ENCODE measurements at regions of chr17 and their contacts with region 1.

Region 1: GRCh38 chr17:44935116-44935515 is 12.5 kb downstream of the KIF18B start:
- DNase-seq: no peak
- ATAC-seq: no peak
- H3K4me3 ChIP-seq: no peak overlapping the region
- H3K27ac ChIP-seq: no peak overlapping the region
- H3K4me1 ChIP-seq: peaks cover 0 to 26% (median 6%) of the 10 kb centered on the region in 9 donors
- H3K27me3 ChIP-seq: no peaks in the 10 kb centered on the region
- CTCF ChIP-seq: no peak

Region 2: DNA sequence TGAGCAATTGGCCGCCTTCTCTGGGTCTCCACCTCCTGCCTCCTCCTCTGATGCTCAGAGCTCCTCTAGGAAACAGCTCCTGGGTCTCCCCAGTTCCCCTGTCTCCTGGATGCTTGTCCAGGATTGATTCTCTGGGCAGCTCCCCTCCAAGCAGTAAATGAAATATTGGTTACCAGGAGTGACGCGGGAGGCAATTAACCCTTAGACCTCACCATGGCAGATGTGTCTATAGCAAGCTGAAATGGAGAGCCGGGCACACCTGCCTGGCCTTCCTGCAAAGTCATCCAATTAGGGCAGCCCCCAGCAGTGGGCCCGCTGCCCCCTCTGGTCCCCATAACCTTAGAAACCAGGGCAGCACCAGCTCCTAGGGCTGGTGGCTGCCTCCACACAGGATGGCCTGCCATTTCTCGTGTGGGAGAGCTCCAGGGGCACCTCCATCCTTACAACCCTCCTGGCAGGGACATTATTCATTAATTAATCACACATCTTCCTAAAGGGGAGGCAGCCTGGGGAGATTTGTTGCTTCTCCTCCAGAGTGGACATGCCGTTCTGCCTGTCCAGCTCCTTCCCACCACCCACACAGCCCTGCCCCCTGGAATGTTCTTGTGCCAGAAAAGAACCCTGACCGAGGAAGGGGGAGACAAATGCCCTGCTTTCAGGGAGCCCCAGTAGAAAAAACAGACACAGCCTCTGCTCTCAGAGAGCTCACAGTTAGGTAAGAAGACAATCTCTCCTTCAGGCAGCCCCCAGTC is 20.7 kb after region 1 on chr17:
- intact Hi-C with region 1: loop called in 1 of 10 experiments (anchors 1 kb)
- DNase-seq: no peak
- ATAC-seq: no peak
- H3K4me3 ChIP-seq: no peak overlapping the region
- H3K27ac ChIP-seq: no peak overlapping the region
- H3K4me1 ChIP-seq: peaks cover 0 to 7% (median 0%) of the 10 kb centered on the region in 9 donors
- H3K27me3 ChIP-seq: peaks cover 0 to 50% (median 27%) of the 10 kb centered on the region in 7 donors
- CTCF ChIP-seq: no peak

Measured in heart right ventricle (tissue), 16 donors.